ENCODE measurements at regions of chr13 and their contacts with region 1.

Region 1: GRCh38 chr13:109494925-109495345 is 291.4 kb downstream of the IRS2 start:
- DNase-seq: peak; percentile 74
- ATAC-seq: peak; percentile 86
- H3K4me3 ChIP-seq: peak overlapping the region; percentile 48
- H3K27ac ChIP-seq: peak overlapping the region; percentile 89
- H3K4me1 ChIP-seq: peaks cover 38% of the 10 kb centered on the region
- H3K27me3 ChIP-seq: no peaks in the 10 kb centered on the region
- CTCF ChIP-seq: no peak

Region 2: GRCh38 chr13:109545961-109546360 is 51.0 kb after region 1 on chr13:
- CTCF ChIA-PET with region 1: no interaction called
- POLR2A ChIA-PET with region 1: interaction called, 12 read pairs
- intact Hi-C with region 1: no loop called
- DNase-seq: no peak
- ATAC-seq: no peak
- H3K4me3 ChIP-seq: no peak overlapping the region
- H3K27ac ChIP-seq: no peak overlapping the region
- H3K4me1 ChIP-seq: no peaks in the 10 kb centered on the region
- H3K27me3 ChIP-seq: no peaks in the 10 kb centered on the region
- CTCF ChIP-seq: no peak